ENCODE measurements at regions of chr22 and their contacts with region 1.

Region 1: DNA sequence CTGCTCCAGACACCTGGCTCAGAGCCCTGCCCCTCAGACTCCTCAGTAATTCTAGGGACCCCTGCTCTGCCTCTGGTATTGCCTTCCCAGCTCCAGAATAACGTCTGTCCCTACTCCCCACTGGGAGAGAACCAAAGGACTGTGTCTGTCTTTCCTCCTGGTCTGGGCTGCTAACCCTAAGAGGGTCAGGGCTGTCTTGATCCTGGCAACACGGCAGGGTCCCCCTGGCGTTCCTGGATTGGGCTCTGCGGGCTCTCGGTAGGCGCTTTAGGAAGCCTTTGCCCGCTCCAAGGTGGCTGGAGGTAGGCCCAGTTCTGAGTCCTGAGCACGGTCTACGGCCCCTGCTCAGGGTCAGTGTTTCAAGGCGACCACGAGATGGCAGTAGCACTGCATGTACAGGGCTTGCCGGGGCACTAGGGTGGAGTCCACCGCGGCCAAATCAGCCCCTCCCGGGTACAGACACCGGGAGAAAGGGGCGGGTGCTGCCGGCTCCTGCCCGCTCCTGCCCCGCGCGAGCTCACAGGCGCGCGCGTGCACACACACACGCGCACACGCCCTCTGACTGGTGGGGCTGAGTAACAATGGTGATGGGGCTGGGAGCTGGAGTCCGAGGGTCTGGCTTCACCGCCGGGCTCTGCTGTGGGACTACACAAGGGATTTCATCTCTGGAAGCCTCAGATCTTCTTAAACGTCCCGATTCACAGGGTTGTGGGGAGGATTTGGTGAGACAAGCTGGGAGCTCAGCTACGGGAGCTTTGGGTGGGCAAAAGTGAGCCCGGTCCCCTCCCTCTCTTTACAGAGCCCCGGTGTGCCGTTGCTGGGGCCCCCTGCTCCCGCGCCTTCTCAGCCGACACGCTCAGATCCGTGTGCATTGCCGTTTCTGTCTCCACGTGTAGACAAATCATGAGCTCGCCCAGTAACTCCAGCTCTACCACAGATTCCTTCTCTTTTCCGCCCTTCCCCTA is 30.1 kb upstream of the HMOX1 start:
- DNase-seq: peak; percentile 81
- H3K4me3 Mint-ChIP-seq: peak overlapping the region; percentile 79
- H3K27ac Mint-ChIP-seq: peak overlapping the region; percentile 48
- H3K4me1 Mint-ChIP-seq: peaks cover 27% of the 10 kb centered on the region
- H3K27me3 Mint-ChIP-seq: peaks cover 5% of the 10 kb centered on the region

Region 2: GRCh38 chr22:35380547-35381423 is 30.0 kb after region 1 on chr22 and contains the start of gene HMOX1:
- intact Hi-C with region 1: loop called (anchors 2 kb)
- DNase-seq: peak; percentile 47
- H3K4me3 Mint-ChIP-seq: peak within 1 kb of the TSS; percentile 58
- H3K27ac Mint-ChIP-seq: no peak within 1 kb of the TSS
- H3K4me1 Mint-ChIP-seq: peaks cover 21% of the 10 kb centered on the region
- H3K27me3 Mint-ChIP-seq: peaks cover 28% of the 10 kb centered on the region
- total RNA-seq, gene HMOX1: 1.6 and 2.0 TPM in 2 replicates

Region 3: GRCh38 chr22:35399678-35400334 is 49.0 kb after region 1 on chr22 and contains the start of gene MCM5:
- intact Hi-C with region 1: loop called (anchors 1 kb)
- DNase-seq: peak; percentile 97
- H3K4me3 Mint-ChIP-seq: peak within 1 kb of the TSS; percentile 97
- H3K27ac Mint-ChIP-seq: peak within 1 kb of the TSS; percentile 96
- H3K4me1 Mint-ChIP-seq: peaks cover 35% of the 10 kb centered on the region
- H3K27me3 Mint-ChIP-seq: no peaks in the 10 kb centered on the region
- total RNA-seq, gene MCM5: 297 and 307 TPM in 2 replicates

Region 4: GRCh38 chr22:35582861-35583670 is 232.2 kb after region 1 on chr22:
- intact Hi-C with region 1: loop called (anchors 1 kb)
- DNase-seq: peak; percentile 29
- H3K4me3 Mint-ChIP-seq: no peak overlapping the region
- H3K27ac Mint-ChIP-seq: no peak overlapping the region
- H3K4me1 Mint-ChIP-seq: peaks cover 6% of the 10 kb centered on the region
- H3K27me3 Mint-ChIP-seq: peaks cover 4% of the 10 kb centered on the region

Region 5: GRCh38 chr22:35921777-35922176 is 571.0 kb after region 1 on chr22:
- intact Hi-C with region 1: loop called (anchors 1 kb)
- DNase-seq: peak; percentile 14
- H3K4me3 Mint-ChIP-seq: no peak overlapping the region
- H3K27ac Mint-ChIP-seq: no peak overlapping the region
- H3K4me1 Mint-ChIP-seq: peaks cover 9% of the 10 kb centered on the region
- H3K27me3 Mint-ChIP-seq: no peaks in the 10 kb centered on the region

Region 6: GRCh38 chr22:36065775-36066559 is 715.1 kb after region 1 on chr22:
- intact Hi-C with region 1: loop called (anchors 5 kb)
- DNase-seq: peak; percentile 49
- H3K4me3 Mint-ChIP-seq: peak overlapping the region; percentile 84
- H3K27ac Mint-ChIP-seq: peak overlapping the region; percentile 83
- H3K4me1 Mint-ChIP-seq: peaks cover 11% of the 10 kb centered on the region
- H3K27me3 Mint-ChIP-seq: peaks cover 21% of the 10 kb centered on the region

Region 7: GRCh38 chr22:36123673-36124630 is 773.1 kb after region 1 on chr22:
- intact Hi-C with region 1: loop called (anchors 1 kb)
- DNase-seq: peak; percentile 89
- H3K4me3 Mint-ChIP-seq: peak overlapping the region; percentile 54
- H3K27ac Mint-ChIP-seq: peak overlapping the region; percentile 83
- H3K4me1 Mint-ChIP-seq: peaks cover 10% of the 10 kb centered on the region
- H3K27me3 Mint-ChIP-seq: peaks cover 4% of the 10 kb centered on the region

Measured in activated T-helper 1 cell treated with anti-CD3 and anti-CD28 coated beads, Interleukin-12 subunit alpha, Interleukin-12 subunit beta, Interleukin-2, Interleukin-4 antibody, amounts not matched to agents 30 ng/mL and 10 ng/mL and 1 ng/mL, durations not matched to agents 14 hours and 24 hours and 36 hours (primary cell).